Common myeloid progenitor, CD34-positive (primary cell): ENCODE measurements at regions of chr19 and their contacts with region 1.

Region 1: DNA sequence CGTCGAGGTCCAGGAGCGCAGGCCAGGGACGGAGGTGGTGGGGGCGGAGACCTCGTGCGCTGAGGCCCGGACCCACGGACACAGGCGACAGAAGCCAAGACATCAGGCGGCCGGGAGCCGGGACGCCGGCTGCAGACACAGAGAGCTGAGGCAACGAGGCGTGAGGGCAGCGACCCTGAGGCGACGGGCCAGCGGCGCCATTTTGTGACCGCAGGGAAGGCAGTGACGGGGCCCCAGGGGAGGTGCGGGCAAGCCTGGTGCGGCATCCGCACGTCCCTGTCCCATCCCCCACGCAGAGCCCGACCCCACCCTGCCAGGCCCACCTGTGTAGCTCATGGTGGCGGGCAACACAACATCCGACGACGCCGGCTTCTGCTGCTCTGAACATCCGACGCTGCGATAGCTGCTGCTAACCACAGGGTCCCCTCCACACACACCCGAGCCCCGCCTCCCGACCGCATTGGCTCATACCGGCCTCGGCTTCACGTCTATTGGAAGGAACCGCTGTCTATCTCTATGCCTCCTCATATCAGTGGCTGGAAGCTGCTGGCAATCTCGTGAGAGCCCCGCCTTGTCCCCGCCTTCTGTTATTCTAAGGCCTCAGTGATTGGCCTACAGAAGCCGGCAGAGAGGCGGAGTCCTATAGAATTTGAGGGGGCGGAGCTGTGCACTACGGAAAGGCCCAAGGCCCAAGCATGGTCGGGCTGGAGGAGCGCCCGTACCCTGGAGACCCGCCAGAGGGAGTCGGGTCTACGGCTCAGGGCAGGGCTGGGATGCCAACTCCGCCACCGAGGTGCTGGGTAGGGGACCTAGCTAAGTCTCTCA is at the start of gene AKAP8L:
- DNase-seq: peak; percentile 100
- H3K4me3 ChIP-seq: peak within 1 kb of the TSS; percentile 85 to 97 (median 95)
- H3K27ac ChIP-seq: peak within 1 kb of the TSS; percentile 81 to 91
- H3K4me1 ChIP-seq: peaks cover 15 to 30% (median 20%) of the 10 kb centered on the region in 4 experiments
- H3K27me3 ChIP-seq: no peaks in the 10 kb centered on the region

Region 2: GRCh38 chr19:15432629-15433518 is 14.1 kb after region 1 on chr19:
- CTCF ChIA-PET with region 1: interaction called, 32 read pairs
- POLR2A ChIA-PET with region 1: interaction called, 16 read pairs
- DNase-seq: peak; percentile 91 to 96 (median 94)
- H3K4me3 ChIP-seq: peak overlapping the region; percentile 54 to 93 (median 80)
- H3K27ac ChIP-seq: peak overlapping the region in 1 of 2 experiments; percentile 54
- H3K4me1 ChIP-seq: peaks cover 2 to 31% (median 25%) of the 10 kb centered on the region in 4 experiments
- H3K27me3 ChIP-seq: no peaks in the 10 kb centered on the region

Region 3: DNA sequence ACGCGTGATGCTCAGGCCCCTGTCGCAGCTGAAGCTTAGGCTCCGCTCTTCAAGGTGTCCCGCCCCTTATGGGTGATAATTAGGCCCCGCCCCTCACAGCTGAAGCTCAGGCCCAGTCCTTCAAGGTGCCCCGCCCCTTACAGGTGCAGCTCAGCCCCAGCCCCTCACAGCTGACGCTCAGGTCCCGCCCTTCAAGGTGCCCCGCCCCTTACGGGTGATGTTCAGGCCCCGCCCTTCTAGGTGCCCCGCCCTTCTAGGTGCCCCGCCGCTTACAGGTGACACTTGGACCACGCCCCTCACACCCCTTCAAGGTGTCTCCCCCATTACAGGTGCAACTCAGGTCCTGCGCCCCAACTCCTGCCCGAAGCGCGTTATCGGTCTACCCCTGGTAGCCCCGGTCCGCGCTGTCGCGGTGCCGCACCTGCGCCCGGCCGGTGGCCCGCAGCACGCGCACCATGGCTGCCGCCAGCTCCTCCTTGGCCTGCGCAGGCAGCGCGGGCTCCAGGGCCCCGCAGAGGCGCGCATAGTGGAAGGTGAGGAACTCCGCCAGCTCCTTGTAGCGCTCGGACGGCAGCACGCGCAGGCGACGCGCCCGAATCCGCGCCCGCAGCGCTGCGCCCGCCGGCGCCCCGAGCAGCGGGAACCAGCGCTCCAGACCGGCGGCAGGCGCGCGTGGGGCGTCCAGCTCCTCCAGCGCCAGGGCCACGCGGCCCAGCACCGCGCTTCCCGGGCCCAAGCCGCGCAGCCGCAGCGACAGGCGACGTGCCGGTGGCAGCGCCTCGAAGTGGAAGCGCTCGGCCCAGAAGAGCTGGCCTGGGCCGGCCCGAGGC is 38.3 kb after region 1 on chr19:
- CTCF ChIA-PET with region 1: interaction called, 30 read pairs
- POLR2A ChIA-PET with region 1: no interaction called
- DNase-seq: no peak
- H3K4me3 ChIP-seq: no peak overlapping the region
- H3K27ac ChIP-seq: no peak overlapping the region
- H3K4me1 ChIP-seq: peaks cover 0 to 9% (median 4%) of the 10 kb centered on the region in 4 experiments
- H3K27me3 ChIP-seq: no peaks in the 10 kb centered on the region

Region 4: DNA sequence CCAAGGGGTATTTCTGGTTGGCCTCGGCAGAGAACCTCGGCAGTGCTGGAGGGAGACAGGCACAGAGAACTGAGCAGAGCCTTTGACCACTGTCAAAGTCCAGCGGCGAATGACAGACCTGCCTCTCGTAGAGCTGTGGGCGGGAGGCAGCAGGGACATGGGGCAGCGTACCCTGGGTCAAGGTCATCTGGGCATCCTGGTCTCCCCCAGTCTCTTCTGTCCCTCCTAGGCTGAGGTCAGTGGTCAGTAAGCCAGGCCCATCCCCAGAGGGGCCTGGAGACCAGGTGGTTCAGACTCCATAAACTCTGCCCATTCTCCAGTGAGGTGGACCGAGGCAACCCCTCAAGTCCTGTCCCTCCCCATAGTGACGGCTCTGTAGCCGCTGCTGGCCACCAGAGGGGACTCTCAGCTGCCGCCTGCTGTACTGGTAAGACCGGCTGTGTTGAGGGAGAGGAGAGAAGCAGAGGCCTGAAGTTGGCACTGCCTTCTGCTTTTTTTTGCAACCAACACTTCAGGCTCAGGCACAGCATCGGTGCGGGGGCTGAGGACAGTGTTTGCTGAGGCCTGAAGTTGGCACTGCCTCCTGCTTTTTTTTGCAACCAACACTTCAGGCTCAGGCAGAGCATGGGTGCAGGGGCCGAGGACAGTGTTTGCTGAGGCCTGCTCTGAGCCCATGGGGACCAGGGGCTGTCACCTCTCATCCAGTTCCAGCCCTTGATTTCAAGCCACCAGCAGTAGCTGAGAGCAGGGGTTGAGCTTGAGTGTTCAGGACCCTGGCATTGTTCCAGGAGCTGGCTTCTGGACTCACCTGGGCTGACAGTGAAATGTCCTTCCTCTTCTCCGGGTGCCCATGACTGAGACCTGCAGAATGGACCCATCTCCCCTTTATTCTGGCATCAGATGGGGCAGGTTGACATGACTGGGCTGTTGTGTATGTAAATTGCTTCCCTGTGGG is 60.9 kb after region 1 on chr19 and contains the start of gene PGLYRP2:
- CTCF ChIA-PET with region 1: interaction called, 32 read pairs
- POLR2A ChIA-PET with region 1: interaction called, 3 read pairs
- DNase-seq: peak; percentile 71 to 85 (median 83)
- H3K4me3 ChIP-seq: no peak within 1 kb of the TSS
- H3K27ac ChIP-seq: no peak within 1 kb of the TSS
- H3K4me1 ChIP-seq: peaks cover 0 to 17% (median 15%) of the 10 kb centered on the region in 4 experiments
- H3K27me3 ChIP-seq: no peaks in the 10 kb centered on the region

Region 5: GRCh38 chr19:15555759-15556633 is 137.2 kb after region 1 on chr19:
- CTCF ChIA-PET with region 1: interaction called, 122 read pairs
- POLR2A ChIA-PET with region 1: interaction called, 12 read pairs
- DNase-seq: peak; percentile 96 to 99 (median 98)
- H3K4me3 ChIP-seq: peak overlapping the region; percentile 16 to 76 (median 58)
- H3K27ac ChIP-seq: no peak overlapping the region
- H3K4me1 ChIP-seq: peaks cover 0 to 20% (median 17%) of the 10 kb centered on the region in 4 experiments
- H3K27me3 ChIP-seq: peaks cover 0 to 6% (median 0%) of the 10 kb centered on the region in 5 experiments